ENCODE measurements at regions of chr10 and their contacts with region 1.

Region 1: DNA sequence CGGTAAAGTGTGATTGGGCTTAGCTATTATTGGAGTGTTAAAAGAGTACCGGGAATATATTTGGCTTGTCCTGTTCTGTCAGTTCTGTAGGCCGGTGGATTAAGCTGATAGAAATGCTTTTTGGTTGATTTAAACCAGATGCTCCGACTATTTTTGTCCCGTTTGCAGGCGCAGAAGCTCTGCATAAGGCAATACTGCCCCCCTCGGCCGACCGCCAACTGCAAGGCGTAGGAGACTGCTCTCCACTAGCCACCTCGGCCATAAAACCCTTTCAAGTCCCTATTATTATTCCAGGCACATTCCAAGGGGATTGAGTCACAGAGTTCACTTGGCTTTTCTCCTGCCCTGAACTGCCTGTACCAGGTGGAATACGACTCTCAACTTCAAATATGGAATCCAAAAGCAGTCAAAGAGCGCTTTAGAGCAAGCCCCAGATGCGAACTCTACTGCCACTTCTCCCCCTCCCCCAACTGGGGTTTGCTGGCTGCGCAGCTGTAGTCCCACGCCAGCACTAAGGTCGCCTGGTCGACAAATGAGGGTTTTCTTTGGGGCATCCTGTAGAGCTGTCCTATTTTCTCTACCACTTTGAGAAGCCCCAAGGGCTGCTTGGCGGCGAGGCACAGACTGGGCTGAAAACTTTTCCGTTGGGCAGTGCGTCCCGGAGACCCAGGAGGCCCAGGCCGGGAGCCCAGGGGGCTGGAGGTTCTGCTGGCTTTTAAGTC is 108.3 kb downstream of the REEP3 start:
- DNase-seq: peak; percentile 91
- ATAC-seq: peak; percentile 66
- H3K4me3 Mint-ChIP-seq: peak overlapping the region; percentile 89
- H3K27ac Mint-ChIP-seq: peak overlapping the region; percentile 90
- H3K4me1 Mint-ChIP-seq: peaks cover 36% of the 10 kb centered on the region
- H3K27me3 Mint-ChIP-seq: peaks cover 8% of the 10 kb centered on the region

Region 2: DNA sequence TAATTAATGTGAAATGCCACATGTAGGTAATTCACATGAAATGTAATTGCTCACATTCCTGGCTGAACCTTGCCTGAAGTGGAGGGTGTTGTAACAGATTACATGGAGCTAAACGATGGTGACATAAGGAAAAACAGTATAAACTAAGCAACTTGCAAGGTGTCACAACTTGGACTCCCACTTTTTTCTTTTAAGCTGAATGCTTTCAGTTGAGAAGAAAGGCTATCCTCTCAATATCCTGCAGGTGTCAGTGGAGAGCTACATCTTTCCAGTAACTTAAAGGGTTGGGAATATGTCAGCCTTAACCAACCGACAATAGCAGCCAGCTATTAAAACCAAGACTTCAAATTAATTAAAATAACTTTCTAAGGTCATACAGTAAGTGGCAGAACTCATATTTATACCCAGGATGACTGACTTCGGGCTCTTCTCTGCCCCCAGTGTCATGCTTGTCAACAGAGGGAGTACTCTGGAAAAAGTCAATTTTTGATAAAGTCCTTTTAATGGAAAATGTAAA is 462.7 kb before region 1 on chr10:
- CTCF ChIA-PET with region 1: interaction called, 77 read pairs
- DNase-seq: no peak
- ATAC-seq: peak; percentile 59
- H3K4me3 Mint-ChIP-seq: no peak overlapping the region
- H3K27ac Mint-ChIP-seq: no peak overlapping the region
- H3K4me1 Mint-ChIP-seq: peaks cover 44% of the 10 kb centered on the region
- H3K27me3 Mint-ChIP-seq: no peaks in the 10 kb centered on the region

Region 3: DNA sequence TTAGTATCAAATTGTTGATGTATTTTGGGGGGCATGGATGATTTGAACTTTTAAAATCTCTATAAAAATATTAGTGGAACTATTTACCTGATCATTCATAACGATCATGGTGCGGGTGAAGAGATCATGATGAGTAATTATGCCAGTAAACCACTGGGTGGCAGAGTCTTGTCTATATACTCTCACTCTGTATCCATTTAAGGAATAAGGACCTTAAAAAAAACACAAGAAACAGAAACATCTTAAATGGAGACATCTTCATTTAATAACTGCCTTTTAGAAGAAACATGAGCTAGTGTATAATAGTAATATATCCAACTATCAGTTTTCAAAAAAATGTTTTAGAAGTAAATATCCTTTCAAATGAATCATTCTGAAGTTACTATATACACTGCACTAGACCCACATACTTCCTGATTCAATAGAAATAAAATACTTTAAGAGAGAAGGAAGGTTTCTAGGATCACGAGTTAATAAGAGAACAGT is 412.4 kb before region 1 on chr10:
- CTCF ChIA-PET with region 1: interaction called, 17 read pairs
- DNase-seq: no peak
- ATAC-seq: peak; percentile 82
- H3K4me3 Mint-ChIP-seq: no peak overlapping the region
- H3K27ac Mint-ChIP-seq: peak overlapping the region; percentile 42
- H3K4me1 Mint-ChIP-seq: peaks cover 60% of the 10 kb centered on the region
- H3K27me3 Mint-ChIP-seq: no peaks in the 10 kb centered on the region

Region 4: GRCh38 chr10:63465293-63466143 is 164.0 kb before region 1 on chr10 and contains the start of gene JMJD1C:
- CTCF ChIA-PET with region 1: interaction called, 10 read pairs
- DNase-seq: peak; percentile 74
- ATAC-seq: peak; percentile 81
- H3K4me3 Mint-ChIP-seq: peak within 1 kb of the TSS; percentile 94
- H3K27ac Mint-ChIP-seq: peak within 1 kb of the TSS; percentile 87
- H3K4me1 Mint-ChIP-seq: peaks cover 19% of the 10 kb centered on the region
- H3K27me3 Mint-ChIP-seq: peaks cover 9% of the 10 kb centered on the region
- total RNA-seq, gene JMJD1C: 55.7 to 87.6 TPM

Region 5: GRCh38 chr10:63521416-63522276 is 107.9 kb before region 1 on chr10:
- CTCF ChIA-PET with region 1: interaction called, 18 read pairs
- DNase-seq: peak; percentile 67
- ATAC-seq: peak; percentile 73
- H3K4me3 Mint-ChIP-seq: peak overlapping the region; percentile 83
- H3K27ac Mint-ChIP-seq: peak overlapping the region; percentile 93
- H3K4me1 Mint-ChIP-seq: peaks cover 54% of the 10 kb centered on the region
- H3K27me3 Mint-ChIP-seq: no peaks in the 10 kb centered on the region

Region 6: DNA sequence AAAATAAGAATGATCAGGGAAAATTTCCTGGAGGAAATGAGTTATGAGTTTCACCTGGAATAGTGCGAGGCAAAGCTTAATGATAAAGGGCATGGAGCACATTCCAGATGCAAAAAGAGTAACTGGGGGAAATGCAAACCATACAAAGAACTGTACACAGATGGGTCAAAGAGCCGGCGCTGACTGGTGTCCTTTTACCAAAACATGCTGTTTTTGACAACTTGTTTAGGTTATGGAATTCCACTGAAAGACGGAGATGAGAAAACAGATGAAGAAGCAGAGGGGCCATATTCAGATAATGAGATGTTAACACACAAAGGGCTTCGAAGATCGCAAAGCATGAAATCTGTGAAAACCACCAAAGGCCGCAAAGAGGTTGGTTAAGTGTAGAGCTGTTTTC is 10.1 kb before region 1 on chr10:
- CTCF ChIA-PET with region 1: interaction called, 10 read pairs
- DNase-seq: no peak
- ATAC-seq: no peak
- H3K4me3 Mint-ChIP-seq: no peak overlapping the region
- H3K27ac Mint-ChIP-seq: no peak overlapping the region
- H3K4me1 Mint-ChIP-seq: no peaks in the 10 kb centered on the region
- H3K27me3 Mint-ChIP-seq: no peaks in the 10 kb centered on the region

Region 7: GRCh38 chr10:63720072-63720537 is 90.6 kb after region 1 on chr10:
- CTCF ChIA-PET with region 1: interaction called, 47 read pairs
- DNase-seq: peak; percentile 64
- ATAC-seq: peak; percentile 63
- H3K4me3 Mint-ChIP-seq: no peak overlapping the region
- H3K27ac Mint-ChIP-seq: no peak overlapping the region
- H3K4me1 Mint-ChIP-seq: peaks cover 23% of the 10 kb centered on the region
- H3K27me3 Mint-ChIP-seq: peaks cover 8% of the 10 kb centered on the region

Measured in activated CD8-positive, alpha-beta memory T cell treated with anti-CD3 and anti-CD28 coated beads, Interleukin-2, amount 10 ng/mL, durations not matched to agents 7 days and 5 days (primary cell).